ENCODE measurements at regions of chr3 and their contacts with region 1.

Region 1: DNA sequence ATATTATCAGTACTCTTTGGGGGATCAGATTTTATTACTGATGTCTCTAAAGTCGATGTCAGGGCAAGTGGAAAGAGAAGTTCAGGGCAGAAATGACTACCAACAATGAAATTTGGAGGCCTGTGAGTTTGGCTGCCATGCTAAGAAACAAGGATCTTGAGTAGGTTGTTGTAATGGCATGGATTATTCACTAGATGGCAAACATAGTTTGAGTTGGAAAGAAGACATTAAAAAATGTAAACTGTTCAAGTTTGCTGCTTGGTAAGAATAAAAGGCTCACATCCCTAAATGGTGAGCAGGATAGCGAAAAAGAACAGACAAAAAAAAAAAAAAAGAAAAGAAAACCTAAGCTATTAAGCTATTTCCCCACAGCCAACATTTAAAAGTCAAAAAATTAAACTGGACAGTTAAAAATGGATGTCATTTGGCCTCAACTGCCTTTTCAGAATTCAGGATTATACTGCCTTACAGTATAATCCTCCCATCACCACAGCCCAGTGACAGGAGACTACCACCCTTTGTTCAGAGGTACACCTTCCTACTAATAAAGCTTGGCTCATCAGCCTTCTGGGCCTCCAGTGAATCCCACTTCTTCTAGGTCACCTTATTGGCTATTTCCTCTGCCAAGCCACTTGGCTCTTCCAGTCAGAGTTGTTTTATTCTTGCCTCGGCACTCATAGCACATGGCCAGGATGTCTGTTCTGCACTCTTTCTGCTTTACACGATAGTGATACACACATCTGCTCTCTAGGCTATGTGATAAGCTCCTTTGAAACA is 163.7 kb downstream of the PLD1 start:
- DNase-seq: no peak
- H3K4me3 ChIP-seq: no peak overlapping the region
- H3K27ac ChIP-seq: peak overlapping the region in 6 of 8 donors; percentile 22 to 49 (median 47)
- H3K4me1 ChIP-seq: peaks cover 0 to 14% (median 8%) of the 10 kb centered on the region in 6 donors
- H3K27me3 ChIP-seq: no peaks in the 10 kb centered on the region
- CTCF ChIP-seq: peak in 10 of 11 experiments; percentile 24 to 70 (median 56)
- POLR2A ChIP-seq: no peak

Region 2: DNA sequence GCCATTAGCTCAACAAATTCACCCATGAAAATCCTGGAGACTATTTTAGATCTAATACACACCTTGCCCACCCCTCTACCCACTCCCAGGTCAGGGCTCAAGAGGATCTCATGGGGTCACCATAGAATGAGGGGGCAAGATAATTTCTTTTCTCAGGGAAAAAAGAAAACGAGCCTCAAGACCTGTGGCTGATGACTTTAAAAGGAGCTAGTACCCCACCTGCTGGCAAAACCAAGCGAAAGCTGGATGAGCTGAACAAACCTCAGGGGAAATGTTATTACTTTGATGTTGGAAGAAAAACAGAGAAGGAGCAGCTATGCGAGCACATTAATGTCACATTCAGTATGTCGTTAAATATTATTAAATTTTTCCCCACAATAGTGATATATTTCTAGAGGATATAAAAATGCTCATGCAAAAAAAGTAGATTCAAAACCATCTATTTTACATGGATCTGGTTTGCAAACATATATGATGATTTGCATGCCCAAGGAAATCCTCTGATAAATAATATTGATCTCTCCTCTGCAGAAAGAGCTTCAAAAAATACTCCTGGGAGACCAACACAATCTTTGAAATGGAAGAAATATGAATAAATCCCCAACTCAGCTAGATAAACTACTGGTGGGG is 126.0 kb after region 1 on chr3:
- intact Hi-C with region 1: loop called (anchors 10 kb)
- DNase-seq: no peak
- H3K4me3 ChIP-seq: no peak overlapping the region
- H3K27ac ChIP-seq: peak overlapping the region in 3 of 8 donors; percentile 76 to 83 (median 78)
- H3K4me1 ChIP-seq: peaks cover 2 to 56% (median 25%) of the 10 kb centered on the region in 6 donors
- H3K27me3 ChIP-seq: no peaks in the 10 kb centered on the region
- CTCF ChIP-seq: peak; percentile 13 to 76 (median 59)
- POLR2A ChIP-seq: no peak

Region 3: DNA sequence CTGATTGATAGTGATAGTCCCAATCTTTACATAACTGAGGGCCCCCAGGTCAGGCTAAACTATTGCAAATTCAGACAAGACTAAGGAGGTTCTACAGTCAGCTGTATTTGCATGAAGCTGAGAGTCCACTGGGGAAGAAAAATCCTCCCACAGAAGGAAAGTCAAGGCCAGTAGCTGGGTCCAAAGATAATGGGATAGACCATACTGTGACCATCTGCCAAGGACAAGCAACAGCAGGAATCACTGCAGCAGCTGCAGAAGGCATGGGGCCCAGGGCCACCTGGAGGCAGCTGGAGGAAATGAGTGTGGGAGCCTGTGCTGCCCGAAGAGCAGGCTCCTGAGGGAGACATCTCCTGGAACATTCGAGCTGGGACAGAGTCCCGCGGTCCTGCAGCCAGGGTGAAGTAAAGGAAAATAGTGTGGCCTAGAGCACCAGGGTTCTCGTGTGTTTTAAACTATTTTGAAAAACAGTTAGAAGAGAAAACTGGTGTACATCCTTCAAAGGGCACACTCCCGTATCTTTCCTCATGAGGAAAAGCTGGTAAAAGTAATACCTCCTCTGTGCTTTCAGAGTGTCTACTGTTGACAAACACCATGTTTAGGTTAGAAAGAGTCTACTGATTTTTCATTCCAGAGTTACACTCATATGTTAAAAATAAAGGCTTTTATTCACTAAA is 183.4 kb after region 1 on chr3:
- intact Hi-C with region 1: loop called (anchors 10 kb)
- DNase-seq: peak; percentile 89
- H3K4me3 ChIP-seq: no peak overlapping the region
- H3K27ac ChIP-seq: peak overlapping the region in 7 of 8 donors; percentile 51 to 89 (median 80)
- H3K4me1 ChIP-seq: peaks cover 5 to 55% (median 36%) of the 10 kb centered on the region in 6 donors
- H3K27me3 ChIP-seq: no peaks in the 10 kb centered on the region
- CTCF ChIP-seq: peak in 8 of 11 experiments; percentile 34 to 61 (median 50)
- POLR2A ChIP-seq: no peak